Ascending aorta (tissue), 2 donors: ENCODE measurements at regions of chr1 and their contacts with region 1.

Region 1: GRCh38 chr1:239306426-239306825 is 79.9 kb upstream of the CHRM3 start:
- DNase-seq: no peak
- H3K4me3 ChIP-seq: no peak overlapping the region
- H3K27ac ChIP-seq: no peak overlapping the region
- H3K4me1 ChIP-seq: no peaks in the 10 kb centered on the region
- H3K27me3 ChIP-seq: no peaks in the 10 kb centered on the region
- CTCF ChIP-seq: no peak

Region 2: DNA sequence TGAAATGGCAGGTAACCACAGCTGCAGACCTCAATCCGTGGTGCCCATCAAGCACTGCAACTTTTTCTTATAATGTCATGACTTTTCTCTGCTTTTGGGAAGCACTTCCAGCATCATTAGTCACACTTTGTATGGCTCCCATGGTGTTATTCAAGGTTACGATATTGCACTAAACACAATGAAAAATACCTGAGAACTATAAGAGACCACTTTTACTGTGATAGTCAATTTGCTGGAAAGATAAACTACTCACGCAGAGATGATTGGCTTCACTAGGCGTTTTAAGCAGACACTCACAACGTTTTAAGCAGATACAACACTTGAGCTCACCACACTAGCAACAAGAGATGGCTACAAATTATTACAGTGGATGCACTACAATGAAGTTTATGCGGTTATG is 23.2 kb before region 1 on chr1:
- intact Hi-C with region 1: loop called (anchors 1 kb)
- DNase-seq: no peak
- H3K4me3 ChIP-seq: no peak overlapping the region
- H3K27ac ChIP-seq: no peak overlapping the region
- H3K4me1 ChIP-seq: no peaks in the 10 kb centered on the region
- H3K27me3 ChIP-seq: no peaks in the 10 kb centered on the region
- CTCF ChIP-seq: no peak

Region 3: GRCh38 chr1:239858058-239858457 is 551.6 kb after region 1 on chr1:
- intact Hi-C with region 1: no loop called
- DNase-seq: no peak
- H3K4me3 ChIP-seq: no peak overlapping the region
- H3K27ac ChIP-seq: no peak overlapping the region
- H3K4me1 ChIP-seq: no peaks in the 10 kb centered on the region
- H3K27me3 ChIP-seq: no peaks in the 10 kb centered on the region
- CTCF ChIP-seq: no peak